Right ventricle myocardium inferior (tissue), 1 donor: ENCODE measurements at regions of chr17 and their contacts with region 1.

Region 1: DNA sequence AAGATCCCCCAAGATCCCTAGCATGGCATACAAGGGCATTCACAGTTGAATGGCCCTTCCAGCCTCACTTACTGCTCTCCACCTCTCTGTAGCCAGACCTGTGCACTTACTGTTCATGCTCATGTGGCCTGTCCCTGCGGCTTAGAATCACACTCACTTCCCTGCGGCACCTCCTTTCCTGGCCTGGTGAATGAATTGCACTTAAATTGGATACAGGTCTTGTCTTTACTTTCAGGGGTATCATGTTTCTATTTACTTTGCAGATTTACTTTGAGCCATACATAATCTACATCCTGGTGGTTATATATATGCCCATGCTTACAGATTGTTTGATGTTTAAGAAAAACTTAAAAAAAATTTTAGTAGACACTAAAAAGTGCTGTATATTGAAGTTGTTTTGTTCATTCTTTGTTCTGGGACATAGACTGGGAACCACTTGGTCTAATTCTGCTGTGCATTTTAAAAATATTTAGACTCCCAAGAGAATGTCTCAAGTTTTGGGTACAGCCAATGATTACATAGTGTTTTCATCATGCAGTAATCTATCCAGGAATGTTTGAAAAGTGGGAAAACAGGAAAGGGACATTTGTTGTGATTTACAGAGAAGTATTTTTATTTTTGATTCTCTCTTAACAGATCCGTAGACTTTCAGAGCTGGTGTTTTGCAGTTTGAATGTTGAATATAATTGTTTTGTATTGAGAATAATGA is 63.9 kb downstream of the NUP88 start:
- DNase-seq: no peak
- ATAC-seq: peak; percentile 63

Region 2: GRCh38 chr17:5373112-5373511 is 17.5 kb after region 1 on chr17:
- intact Hi-C with region 1: no loop called
- DNase-seq: no peak
- ATAC-seq: no peak

Region 3: GRCh38 chr17:5391678-5392077 is 36.1 kb after region 1 on chr17:
- intact Hi-C with region 1: no loop called
- DNase-seq: no peak
- ATAC-seq: no peak

Region 4: GRCh38 chr17:5405400-5405799 is 49.8 kb after region 1 on chr17:
- intact Hi-C with region 1: loop called (anchors 10 kb)
- DNase-seq: no peak
- ATAC-seq: no peak